ENCODE measurements at regions of chr3 and their contacts with region 1.

Region 1: DNA sequence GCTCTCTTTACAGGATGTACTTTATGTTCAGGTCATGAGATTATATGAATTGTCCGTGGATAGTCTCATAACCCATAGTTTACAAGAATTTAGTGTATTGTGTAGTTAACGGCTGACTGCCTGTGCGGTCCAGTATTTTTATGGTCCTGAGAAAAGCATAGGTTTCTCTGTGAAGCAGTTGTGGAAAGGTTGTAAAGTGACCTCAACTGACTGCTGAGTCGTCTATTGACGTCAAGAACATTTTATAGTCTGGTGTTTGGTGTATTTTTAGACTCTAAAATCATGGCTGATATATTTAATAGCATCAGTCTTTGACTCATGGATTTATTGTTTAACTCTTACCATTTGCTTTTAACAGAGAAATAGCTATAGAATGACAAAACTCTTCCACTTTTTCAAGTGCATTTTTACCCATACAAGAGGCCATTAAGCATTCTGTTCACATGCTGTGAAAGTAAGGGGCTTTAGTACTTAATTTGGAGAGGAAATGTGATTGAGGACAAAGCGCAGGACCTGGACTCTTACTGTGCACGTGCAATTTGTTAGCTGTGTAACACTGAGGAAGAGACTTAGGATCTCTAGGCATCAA is 240.7 kb downstream of the NFKBIZ start:
- DNase-seq: peak; percentile 98
- ATAC-seq: peak; percentile 66
- H3K4me3 ChIP-seq: no peak overlapping the region
- H3K27ac ChIP-seq: peak overlapping the region; percentile 35
- H3K4me1 ChIP-seq: peaks cover 16% of the 10 kb centered on the region; the same call in 1 of the 2 replicates
- H3K27me3 ChIP-seq: no peaks in the 10 kb centered on the region
- CTCF ChIP-seq: no peak
- POLR2A ChIP-seq: no peak
- RAD21 ChIP-seq: 0 out of 2 replicates have a peak, but pooled peaks have one; percentile 27

Region 2: DNA sequence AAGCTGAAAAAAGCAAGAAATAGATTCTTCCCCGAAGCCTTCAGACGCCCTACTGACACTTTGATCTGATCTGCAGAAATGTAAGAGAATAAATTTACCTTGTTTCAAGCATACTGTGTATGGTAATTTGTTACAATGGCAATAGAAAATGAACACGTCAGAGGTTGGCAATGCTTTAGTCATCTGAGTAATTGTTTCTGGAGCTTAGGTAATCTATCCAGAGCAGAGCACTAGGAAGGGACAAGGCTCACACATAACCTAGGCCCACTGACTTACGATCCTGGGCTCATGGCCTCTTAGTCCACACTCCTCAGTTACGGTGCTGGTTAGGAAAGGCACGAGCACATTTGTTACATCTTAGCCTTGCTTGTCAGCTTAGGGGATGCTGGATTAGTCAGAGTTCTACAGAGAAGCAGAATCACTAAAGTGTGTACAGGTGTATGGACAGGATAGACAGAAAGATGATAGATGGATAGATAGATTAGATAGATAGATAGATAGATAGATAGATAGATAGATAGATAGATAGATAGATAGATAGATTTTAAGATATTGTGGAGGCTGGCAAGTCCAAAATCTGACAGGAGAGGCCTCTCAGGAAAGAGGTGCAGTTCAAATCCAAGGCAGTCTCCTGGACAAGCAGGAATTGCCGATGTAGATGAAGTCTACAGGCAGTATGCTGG is 1876.0 kb before region 1 on chr3:
- CTCF ChIA-PET with region 1: no interaction called
- POLR2A ChIA-PET with region 1: no interaction called
- dilution Hi-C with region 1: no loop called
- in situ Hi-C with region 1: no loop called
- intact Hi-C with region 1: no loop called
- DNase-seq: peak; percentile 32
- ATAC-seq: no peak
- H3K4me3 ChIP-seq: no peak overlapping the region
- H3K27ac ChIP-seq: no peak overlapping the region
- H3K4me1 ChIP-seq: peaks cover 16% of the 10 kb centered on the region
- H3K27me3 ChIP-seq: no peaks in the 10 kb centered on the region; the same call in 1 of the 2 replicates
- CTCF ChIP-seq: no peak
- POLR2A ChIP-seq: no peak
- RAD21 ChIP-seq: no peak

Region 3: GRCh38 chr3:101868534-101869464 is 221.2 kb before region 1 on chr3:
- CTCF ChIA-PET with region 1: no interaction called
- POLR2A ChIA-PET with region 1: no interaction called
- dilution Hi-C with region 1: no loop called
- in situ Hi-C with region 1: no loop called
- intact Hi-C with region 1: loop called (anchors 5 kb)
- DNase-seq: peak; percentile 58
- ATAC-seq: no peak
- H3K4me3 ChIP-seq: no peak overlapping the region
- H3K27ac ChIP-seq: no peak overlapping the region
- H3K4me1 ChIP-seq: peaks cover 9% of the 10 kb centered on the region
- H3K27me3 ChIP-seq: no peaks in the 10 kb centered on the region
- CTCF ChIP-seq: no peak
- POLR2A ChIP-seq: no peak
- RAD21 ChIP-seq: no peak

Region 4: DNA sequence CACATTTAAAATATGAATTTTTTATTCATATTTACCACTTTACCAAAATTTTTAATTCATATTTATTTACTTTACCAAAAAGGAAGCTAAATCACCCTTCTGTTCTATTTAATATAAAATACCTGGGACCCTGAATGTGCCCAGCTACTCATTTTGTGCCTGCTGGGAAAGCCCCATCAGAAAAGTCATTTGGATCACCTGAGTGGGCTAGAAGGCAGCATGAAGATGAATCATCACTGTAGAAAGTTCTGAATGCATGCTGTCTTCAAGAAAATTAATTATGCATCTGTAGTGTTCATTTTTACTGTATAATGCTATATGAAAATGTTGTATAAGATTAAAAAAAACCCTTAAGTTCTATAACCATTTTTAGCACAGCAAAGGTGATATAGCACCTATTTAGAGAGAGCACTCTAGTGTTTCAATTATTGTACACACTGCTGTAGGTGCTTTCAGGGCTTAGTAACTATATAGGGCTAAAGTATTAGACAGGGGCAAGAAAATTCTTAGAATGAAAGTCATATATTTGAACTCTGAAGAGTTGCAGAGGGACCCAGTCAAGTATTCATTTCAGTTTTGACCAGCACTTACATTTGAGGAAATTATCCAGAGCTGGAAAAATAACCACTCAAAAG is 65.6 kb before region 1 on chr3:
- CTCF ChIA-PET with region 1: no interaction called
- POLR2A ChIA-PET with region 1: no interaction called
- dilution Hi-C with region 1: no loop called
- in situ Hi-C with region 1: no loop called
- intact Hi-C with region 1: no loop called
- DNase-seq: no peak
- ATAC-seq: no peak
- H3K4me3 ChIP-seq: no peak overlapping the region
- H3K27ac ChIP-seq: no peak overlapping the region
- H3K4me1 ChIP-seq: no peaks in the 10 kb centered on the region
- H3K27me3 ChIP-seq: no peaks in the 10 kb centered on the region
- CTCF ChIP-seq: no peak
- POLR2A ChIP-seq: no peak
- RAD21 ChIP-seq: no peak